Activated CD4-positive, alpha-beta memory T cell treated with anti-CD3 and anti-CD28 coated beads for 36 hours (primary cell): ENCODE measurements at regions of chr9 and their contacts with region 1.

Region 1: DNA sequence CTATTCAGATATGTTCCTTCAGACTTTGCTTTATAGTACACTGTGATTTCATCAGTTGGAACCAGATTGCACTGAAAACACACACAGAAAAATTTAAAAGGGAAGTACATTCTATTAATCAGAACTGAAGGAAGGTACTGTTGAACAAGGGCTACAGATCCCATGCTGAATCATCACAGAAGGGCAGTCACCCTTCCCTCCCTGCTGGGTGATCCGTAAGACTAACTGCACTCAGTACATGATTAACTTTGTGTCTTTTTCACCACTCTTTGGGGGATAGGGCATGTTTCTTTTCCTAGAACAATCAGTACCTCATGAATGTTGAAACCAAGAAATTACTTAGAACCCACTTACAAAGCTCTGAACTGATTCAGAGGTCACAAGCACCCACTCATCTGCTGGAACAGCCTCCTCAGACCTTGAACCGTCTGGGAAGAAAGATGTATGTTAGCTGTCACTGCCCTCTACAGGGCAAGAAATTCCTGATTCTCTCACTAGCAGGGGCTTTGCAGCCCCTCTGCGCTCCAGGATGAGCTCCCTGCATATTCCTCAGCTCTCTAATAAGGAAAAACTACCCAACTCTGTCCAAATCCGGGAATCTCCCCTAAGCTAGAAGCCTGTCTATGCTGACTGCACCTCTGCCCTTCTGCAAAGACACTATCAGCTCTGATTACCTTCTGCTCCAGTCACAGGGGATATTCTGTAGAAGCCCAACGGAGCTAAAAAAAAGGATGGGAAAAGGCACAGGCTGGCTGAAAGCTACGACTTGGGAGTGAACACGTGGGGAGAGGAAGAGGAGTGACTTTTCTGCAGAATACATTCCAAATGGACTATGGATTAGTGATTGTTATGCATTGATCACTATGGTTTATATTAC is 51.0 kb downstream of the IARS1 start:
- DNase-seq: no peak
- H3K4me3 Mint-ChIP-seq: no peak overlapping the region
- H3K27ac Mint-ChIP-seq: no peak overlapping the region
- H3K4me1 Mint-ChIP-seq: peaks cover 10% of the 10 kb centered on the region
- H3K27me3 Mint-ChIP-seq: no peaks in the 10 kb centered on the region

Region 2: DNA sequence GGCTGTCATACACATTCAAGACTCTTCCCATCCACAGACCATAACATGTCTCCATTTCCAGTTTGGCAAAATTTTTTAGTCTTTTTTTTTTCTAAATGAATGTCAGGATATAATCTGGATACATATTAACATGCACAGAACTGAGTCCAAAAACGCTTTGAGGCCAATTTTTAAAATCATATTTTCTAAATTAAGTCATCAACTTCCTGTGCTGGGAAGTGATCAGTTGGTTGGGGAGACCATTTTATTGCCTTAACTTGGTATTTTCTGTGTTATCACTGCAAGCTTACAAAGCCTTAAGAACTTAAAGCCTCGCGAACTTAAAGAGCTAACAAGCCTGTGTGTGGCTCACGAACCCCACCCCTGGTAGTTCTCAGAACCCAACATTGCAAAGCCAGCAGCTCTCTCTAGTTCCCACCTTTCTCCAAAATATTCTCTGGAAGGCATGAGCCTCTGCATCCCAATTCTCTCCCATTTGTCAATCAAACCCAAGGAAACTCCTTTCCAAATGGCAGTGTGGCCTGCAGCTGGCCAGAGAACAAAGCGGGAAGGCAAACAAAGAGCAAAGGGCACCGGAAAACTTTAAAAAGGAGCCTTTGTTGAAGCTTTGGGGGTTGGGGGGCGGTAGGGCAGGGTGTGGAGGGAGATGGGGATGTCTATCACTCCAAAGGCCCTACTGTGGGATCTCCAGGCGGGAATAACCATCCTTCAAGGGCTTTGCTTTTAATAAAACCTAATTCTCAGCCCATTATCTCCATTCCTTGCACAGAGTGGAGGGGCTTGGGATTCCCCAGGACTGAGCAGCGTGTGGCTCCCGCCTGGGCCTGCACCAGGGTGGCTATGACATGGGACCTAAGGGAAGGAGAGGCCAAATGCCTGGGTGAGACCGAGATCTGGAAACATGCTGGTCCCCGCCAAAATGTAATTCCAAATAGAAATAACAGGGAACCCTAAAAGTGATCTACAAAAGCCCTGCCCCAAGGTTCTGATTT is 357.5 kb before region 1 on chr9:
- CTCF ChIA-PET with region 1: no interaction called
- POLR2A ChIA-PET with region 1: no interaction called
- intact Hi-C with region 1: no loop called
- DNase-seq: no peak
- H3K4me3 Mint-ChIP-seq: no peak overlapping the region
- H3K27ac Mint-ChIP-seq: no peak overlapping the region
- H3K4me1 Mint-ChIP-seq: no peaks in the 10 kb centered on the region
- H3K27me3 Mint-ChIP-seq: peaks cover 5% of the 10 kb centered on the region

Region 3: GRCh38 chr9:92276331-92277032 is 34.0 kb after region 1 on chr9:
- CTCF ChIA-PET with region 1: interaction called, 3 read pairs
- POLR2A ChIA-PET with region 1: interaction called, 5 read pairs
- intact Hi-C with region 1: loop called (anchors 5 kb)
- DNase-seq: no peak
- H3K4me3 Mint-ChIP-seq: no peak overlapping the region
- H3K27ac Mint-ChIP-seq: peak overlapping the region; percentile 71
- H3K4me1 Mint-ChIP-seq: peaks cover 30% of the 10 kb centered on the region
- H3K27me3 Mint-ChIP-seq: no peaks in the 10 kb centered on the region